ENCODE measurements at regions of chr13 and their contacts with region 1.

Region 1: GRCh38 chr13:30898678-30899241 is 7.3 kb upstream of the MEDAG start:
- DNase-seq: peak; percentile 35
- H3K4me3 Mint-ChIP-seq: no peak overlapping the region
- H3K27ac Mint-ChIP-seq: no peak overlapping the region
- H3K4me1 Mint-ChIP-seq: peaks cover 20% of the 10 kb centered on the region
- H3K27me3 Mint-ChIP-seq: peaks cover 23% of the 10 kb centered on the region

Region 2: GRCh38 chr13:30792285-30793000 is 106.3 kb before region 1 on chr13:
- CTCF ChIA-PET with region 1: no interaction called
- POLR2A ChIA-PET with region 1: no interaction called
- intact Hi-C with region 1: no loop called
- DNase-seq: no peak
- H3K4me3 Mint-ChIP-seq: no peak overlapping the region
- H3K27ac Mint-ChIP-seq: no peak overlapping the region
- H3K4me1 Mint-ChIP-seq: peaks cover 35% of the 10 kb centered on the region
- H3K27me3 Mint-ChIP-seq: no peaks in the 10 kb centered on the region

Region 3: GRCh38 chr13:30880856-30881155 is 18.0 kb before region 1 on chr13:
- CTCF ChIA-PET with region 1: no interaction called
- POLR2A ChIA-PET with region 1: no interaction called
- intact Hi-C with region 1: loop called (anchors 1 kb)
- DNase-seq: no peak
- H3K4me3 Mint-ChIP-seq: no peak overlapping the region
- H3K27ac Mint-ChIP-seq: no peak overlapping the region
- H3K4me1 Mint-ChIP-seq: peaks cover 13% of the 10 kb centered on the region
- H3K27me3 Mint-ChIP-seq: peaks cover 16% of the 10 kb centered on the region

Region 4: GRCh38 chr13:30918662-30919405 is 20.1 kb after region 1 on chr13:
- CTCF ChIA-PET with region 1: no interaction called
- POLR2A ChIA-PET with region 1: no interaction called
- intact Hi-C with region 1: no loop called
- DNase-seq: no peak
- H3K4me3 Mint-ChIP-seq: no peak overlapping the region
- H3K27ac Mint-ChIP-seq: no peak overlapping the region
- H3K4me1 Mint-ChIP-seq: no peaks in the 10 kb centered on the region
- H3K27me3 Mint-ChIP-seq: peaks cover 28% of the 10 kb centered on the region